ENCODE measurements at regions of chr11 and their contacts with region 1.

Region 1: GRCh38 chr11:61947486-61948210 is 2.5 kb upstream of the BEST1 start:
- DNase-seq: peak; percentile 89
- H3K4me3 Mint-ChIP-seq: no peak overlapping the region
- H3K27ac Mint-ChIP-seq: no peak overlapping the region
- H3K4me1 Mint-ChIP-seq: peaks cover 15% of the 10 kb centered on the region
- H3K27me3 Mint-ChIP-seq: peaks cover 11% of the 10 kb centered on the region
- CTCF ChIP-seq: peak; percentile 84

Region 2: DNA sequence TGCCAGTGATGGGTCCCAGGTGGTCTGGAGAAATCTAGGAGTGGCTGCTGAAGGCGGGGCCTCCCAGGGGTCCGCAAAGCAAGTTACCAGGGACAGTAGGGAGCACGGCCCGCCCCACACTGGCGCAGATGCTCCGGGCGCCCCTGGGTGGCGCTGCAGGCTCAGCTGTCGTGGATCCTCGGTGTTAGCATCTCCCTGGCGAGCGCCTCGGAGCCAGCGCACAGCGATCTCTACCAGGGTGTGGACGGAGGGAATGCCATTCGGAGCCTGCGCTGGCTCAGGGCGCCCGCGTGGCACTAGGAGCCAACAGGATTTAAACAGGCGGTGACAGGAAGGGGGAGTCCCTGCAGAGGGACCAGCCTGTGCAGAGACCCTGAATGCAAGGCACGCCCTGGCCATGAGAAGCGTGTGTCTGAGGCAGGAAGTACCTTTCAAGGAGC is 76.5 kb before region 1 on chr11:
- CTCF ChIA-PET with region 1: interaction called, 13 read pairs
- POLR2A ChIA-PET with region 1: no interaction called
- intact Hi-C with region 1: loop called (anchors 1 kb)
- DNase-seq: peak; percentile 78
- H3K4me3 Mint-ChIP-seq: no peak overlapping the region
- H3K27ac Mint-ChIP-seq: no peak overlapping the region
- H3K4me1 Mint-ChIP-seq: peaks cover 18% of the 10 kb centered on the region
- H3K27me3 Mint-ChIP-seq: no peaks in the 10 kb centered on the region
- CTCF ChIP-seq: peak; percentile 97

Region 3: GRCh38 chr11:61908730-61909315 is 38.8 kb before region 1 on chr11:
- CTCF ChIA-PET with region 1: interaction called, 217 read pairs
- POLR2A ChIA-PET with region 1: no interaction called
- intact Hi-C with region 1: no loop called
- DNase-seq: no peak
- H3K4me3 Mint-ChIP-seq: no peak overlapping the region
- H3K27ac Mint-ChIP-seq: no peak overlapping the region
- H3K4me1 Mint-ChIP-seq: no peaks in the 10 kb centered on the region
- H3K27me3 Mint-ChIP-seq: no peaks in the 10 kb centered on the region
- CTCF ChIP-seq: no peak

Region 4: GRCh38 chr11:61967116-61967923 is 19.7 kb after region 1 on chr11 and contains the start of gene FTH1:
- CTCF ChIA-PET with region 1: interaction called, 54 read pairs
- POLR2A ChIA-PET with region 1: interaction called, 17 read pairs
- intact Hi-C with region 1: no loop called
- DNase-seq: peak; percentile 90
- H3K4me3 Mint-ChIP-seq: peak within 1 kb of the TSS; percentile 90
- H3K27ac Mint-ChIP-seq: peak within 1 kb of the TSS; percentile 97
- H3K4me1 Mint-ChIP-seq: peaks cover 58% of the 10 kb centered on the region
- H3K27me3 Mint-ChIP-seq: no peaks in the 10 kb centered on the region
- CTCF ChIP-seq: no peak
- total RNA-seq, gene FTH1: 8,367 and 15,492 TPM in 2 replicates

Region 5: GRCh38 chr11:62054484-62055121 is 107.0 kb after region 1 on chr11:
- CTCF ChIA-PET with region 1: interaction called, 20 read pairs
- POLR2A ChIA-PET with region 1: interaction called, 7 read pairs
- intact Hi-C with region 1: loop called (anchors 1 kb)
- DNase-seq: peak; percentile 93
- H3K4me3 Mint-ChIP-seq: peak overlapping the region; percentile 26
- H3K27ac Mint-ChIP-seq: peak overlapping the region; percentile 75
- H3K4me1 Mint-ChIP-seq: peaks cover 18% of the 10 kb centered on the region
- H3K27me3 Mint-ChIP-seq: no peaks in the 10 kb centered on the region
- CTCF ChIP-seq: peak; percentile 81

Region 6: DNA sequence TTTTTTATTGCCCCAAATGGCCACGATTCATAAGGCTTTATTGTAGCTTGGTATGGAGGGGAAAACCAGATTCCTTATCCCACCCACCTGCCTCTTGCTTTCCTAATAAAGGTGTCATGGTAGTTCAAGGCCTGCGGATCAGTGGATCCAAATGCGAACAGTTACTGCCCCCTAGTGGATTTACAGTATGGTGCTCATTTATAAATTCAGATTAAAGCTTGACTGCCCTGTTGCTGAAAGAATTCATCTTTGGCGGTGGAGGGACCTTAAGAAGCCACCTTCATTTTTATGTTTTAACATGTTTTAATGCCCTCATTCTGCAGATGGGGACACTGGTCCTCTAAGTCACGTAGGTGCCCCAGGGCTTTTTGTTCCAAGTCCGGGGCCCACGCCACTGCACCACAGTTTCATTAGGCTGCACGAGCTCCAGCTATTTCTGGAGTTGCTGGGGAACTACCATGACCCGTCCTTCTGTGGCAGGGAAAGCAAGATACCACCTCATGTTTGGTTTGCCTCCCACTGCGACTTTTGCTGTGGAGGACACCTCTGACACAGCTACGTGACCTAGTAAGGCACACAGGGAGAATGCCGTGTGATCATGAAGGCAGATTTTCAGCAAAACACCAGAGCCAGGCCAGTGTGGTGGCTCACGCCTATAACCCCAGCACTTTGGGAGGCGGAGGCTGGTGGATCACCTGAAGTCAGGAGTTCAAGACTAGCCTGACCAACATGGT is 160.5 kb after region 1 on chr11:
- CTCF ChIA-PET with region 1: interaction called, 19 read pairs
- POLR2A ChIA-PET with region 1: no interaction called
- intact Hi-C with region 1: no loop called
- DNase-seq: peak; percentile 69
- H3K4me3 Mint-ChIP-seq: no peak overlapping the region
- H3K27ac Mint-ChIP-seq: no peak overlapping the region
- H3K4me1 Mint-ChIP-seq: no peaks in the 10 kb centered on the region
- H3K27me3 Mint-ChIP-seq: no peaks in the 10 kb centered on the region
- CTCF ChIP-seq: peak; percentile 79

Region 7: GRCh38 chr11:62166371-62166770 is 218.7 kb after region 1 on chr11:
- CTCF ChIA-PET with region 1: no interaction called
- POLR2A ChIA-PET with region 1: no interaction called
- intact Hi-C with region 1: no loop called
- DNase-seq: no peak
- H3K4me3 Mint-ChIP-seq: no peak overlapping the region
- H3K27ac Mint-ChIP-seq: no peak overlapping the region
- H3K4me1 Mint-ChIP-seq: no peaks in the 10 kb centered on the region
- H3K27me3 Mint-ChIP-seq: peaks cover 85% of the 10 kb centered on the region
- CTCF ChIP-seq: no peak

Measured in MCF 10A (cell line).